Activated B cell treated with CpG ODN at 0.5 μM for 24 hours (primary cell): ENCODE measurements at regions of chr7 and their contacts with region 1.

Region 1: GRCh38 chr7:76166404-76167255 is 35.1 kb upstream of the SRRM3 start:
- DNase-seq: peak; percentile 84
- ATAC-seq: peak; percentile 86
- H3K4me3 Mint-ChIP-seq: peak overlapping the region; percentile 86
- H3K27ac Mint-ChIP-seq: peak overlapping the region; percentile 73
- H3K4me1 Mint-ChIP-seq: peaks cover 5% of the 10 kb centered on the region
- H3K27me3 Mint-ChIP-seq: peaks cover 2% of the 10 kb centered on the region
- CTCF ChIP-seq: no peak

Region 2: DNA sequence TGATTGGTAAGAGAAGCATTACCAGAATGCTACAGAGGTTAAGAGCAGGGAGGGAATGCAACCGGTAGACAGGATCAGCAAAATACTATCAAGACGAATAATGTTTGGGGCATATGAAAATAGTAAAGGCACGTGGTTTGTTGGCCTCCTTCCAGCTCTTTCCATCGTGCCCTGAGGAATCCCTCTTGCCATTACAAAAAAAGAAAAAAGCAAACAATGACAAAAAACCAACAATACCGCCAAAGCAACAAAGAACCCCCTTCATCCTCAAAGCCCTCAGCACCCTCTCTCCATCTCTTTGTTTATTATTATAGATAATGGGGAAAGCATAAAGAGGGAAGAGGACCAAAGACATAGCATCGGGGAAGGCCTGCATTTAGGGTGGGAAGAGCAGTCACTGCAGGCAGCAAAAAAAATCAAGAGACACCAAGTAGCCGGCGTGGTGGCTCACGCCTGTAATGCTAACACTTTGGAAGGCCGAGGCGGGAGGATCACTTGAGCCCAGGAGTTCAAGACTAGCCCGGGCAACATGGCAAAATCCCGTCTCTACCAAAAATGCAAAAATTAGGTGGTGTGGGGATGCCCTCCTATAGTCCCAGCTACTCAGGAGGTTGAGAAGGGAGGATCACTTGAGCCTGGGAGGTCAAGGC is 505.9 kb before region 1 on chr7:
- CTCF ChIA-PET with region 1: no interaction called
- POLR2A ChIA-PET with region 1: no interaction called
- intact Hi-C with region 1: no loop called
- DNase-seq: no peak
- ATAC-seq: no peak
- H3K4me3 Mint-ChIP-seq: no peak overlapping the region
- H3K27ac Mint-ChIP-seq: no peak overlapping the region
- H3K4me1 Mint-ChIP-seq: peaks cover 29% of the 10 kb centered on the region
- H3K27me3 Mint-ChIP-seq: no peaks in the 10 kb centered on the region
- CTCF ChIP-seq: no peak

Region 3: GRCh38 chr7:76047811-76048667 is 118.6 kb before region 1 on chr7 and contains the starts of genes MDH2 and STYXL1:
- CTCF ChIA-PET with region 1: no interaction called
- POLR2A ChIA-PET with region 1: no interaction called
- intact Hi-C with region 1: loop called (anchors 5 kb)
- DNase-seq: peak; percentile 82
- ATAC-seq: peak; percentile 89
- H3K4me3 Mint-ChIP-seq: peak within 1 kb of the TSS; percentile 98
- H3K27ac Mint-ChIP-seq: peak within 1 kb of the TSS; percentile 95
- H3K4me1 Mint-ChIP-seq: peaks cover 40% of the 10 kb centered on the region
- H3K27me3 Mint-ChIP-seq: no peaks in the 10 kb centered on the region
- CTCF ChIP-seq: no peak
- total RNA-seq, gene MDH2: 120 and 125 TPM in 2 replicates
- total RNA-seq, gene STYXL1: 23.1 and 28.1 TPM in 2 replicates